ENCODE measurements at regions of chr19 and their contacts with region 1.

Region 1: GRCh38 chr19:6048808-6049405 is 61.4 kb downstream of the RFX2 start:
- DNase-seq: peak; percentile 64
- H3K4me3 Mint-ChIP-seq: no peak overlapping the region
- H3K27ac Mint-ChIP-seq: peak overlapping the region; percentile 21
- H3K4me1 Mint-ChIP-seq: peaks cover 7% of the 10 kb centered on the region
- H3K27me3 Mint-ChIP-seq: peaks cover 7% of the 10 kb centered on the region

Region 2: DNA sequence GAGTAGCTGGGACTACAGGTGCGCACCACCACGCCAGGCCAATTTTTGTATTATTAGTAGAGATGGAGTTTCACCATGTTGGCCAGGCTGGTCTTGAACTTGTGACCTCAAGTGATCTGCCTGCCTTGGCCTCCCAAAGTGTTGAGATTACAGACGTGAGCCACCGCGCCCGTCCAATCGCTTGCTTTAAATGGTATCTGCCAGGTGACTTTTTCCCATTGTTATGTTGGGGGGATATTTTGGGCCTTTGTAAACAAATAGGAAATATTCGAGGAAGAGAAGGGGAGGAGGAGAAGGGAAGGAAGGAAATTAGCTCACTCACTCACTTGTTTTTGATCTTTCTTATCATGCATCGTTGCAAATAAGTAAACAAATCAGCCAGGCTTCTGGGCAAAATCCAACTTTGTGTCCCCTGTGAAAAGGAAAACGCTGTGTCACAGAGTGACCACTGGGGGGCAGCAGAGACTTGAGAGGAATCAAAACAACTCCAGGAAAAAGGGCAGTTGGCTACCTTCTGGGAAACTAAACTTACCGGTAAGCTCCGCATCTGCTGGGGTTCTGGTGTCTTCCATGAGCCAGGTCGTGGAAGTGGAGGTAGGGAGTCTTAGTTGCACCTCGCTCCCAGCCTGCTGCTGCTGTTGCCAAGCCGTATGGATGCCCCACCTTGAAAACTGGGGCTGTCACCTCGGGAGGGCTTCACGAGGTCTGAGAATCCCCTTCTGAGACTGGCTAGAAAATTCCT is 61.7 kb before region 1 on chr19:
- intact Hi-C with region 1: loop called (anchors 2 kb)
- DNase-seq: peak; percentile 57
- H3K4me3 Mint-ChIP-seq: peak overlapping the region; percentile 75
- H3K27ac Mint-ChIP-seq: peak overlapping the region; percentile 55
- H3K4me1 Mint-ChIP-seq: peaks cover 44% of the 10 kb centered on the region
- H3K27me3 Mint-ChIP-seq: no peaks in the 10 kb centered on the region

Region 3: GRCh38 chr19:6065685-6066374 is 16.9 kb after region 1 on chr19:
- intact Hi-C with region 1: no loop called
- DNase-seq: no peak
- H3K4me3 Mint-ChIP-seq: peak overlapping the region; percentile 32
- H3K27ac Mint-ChIP-seq: peak overlapping the region; percentile 81
- H3K4me1 Mint-ChIP-seq: peaks cover 48% of the 10 kb centered on the region
- H3K27me3 Mint-ChIP-seq: no peaks in the 10 kb centered on the region

Region 4: DNA sequence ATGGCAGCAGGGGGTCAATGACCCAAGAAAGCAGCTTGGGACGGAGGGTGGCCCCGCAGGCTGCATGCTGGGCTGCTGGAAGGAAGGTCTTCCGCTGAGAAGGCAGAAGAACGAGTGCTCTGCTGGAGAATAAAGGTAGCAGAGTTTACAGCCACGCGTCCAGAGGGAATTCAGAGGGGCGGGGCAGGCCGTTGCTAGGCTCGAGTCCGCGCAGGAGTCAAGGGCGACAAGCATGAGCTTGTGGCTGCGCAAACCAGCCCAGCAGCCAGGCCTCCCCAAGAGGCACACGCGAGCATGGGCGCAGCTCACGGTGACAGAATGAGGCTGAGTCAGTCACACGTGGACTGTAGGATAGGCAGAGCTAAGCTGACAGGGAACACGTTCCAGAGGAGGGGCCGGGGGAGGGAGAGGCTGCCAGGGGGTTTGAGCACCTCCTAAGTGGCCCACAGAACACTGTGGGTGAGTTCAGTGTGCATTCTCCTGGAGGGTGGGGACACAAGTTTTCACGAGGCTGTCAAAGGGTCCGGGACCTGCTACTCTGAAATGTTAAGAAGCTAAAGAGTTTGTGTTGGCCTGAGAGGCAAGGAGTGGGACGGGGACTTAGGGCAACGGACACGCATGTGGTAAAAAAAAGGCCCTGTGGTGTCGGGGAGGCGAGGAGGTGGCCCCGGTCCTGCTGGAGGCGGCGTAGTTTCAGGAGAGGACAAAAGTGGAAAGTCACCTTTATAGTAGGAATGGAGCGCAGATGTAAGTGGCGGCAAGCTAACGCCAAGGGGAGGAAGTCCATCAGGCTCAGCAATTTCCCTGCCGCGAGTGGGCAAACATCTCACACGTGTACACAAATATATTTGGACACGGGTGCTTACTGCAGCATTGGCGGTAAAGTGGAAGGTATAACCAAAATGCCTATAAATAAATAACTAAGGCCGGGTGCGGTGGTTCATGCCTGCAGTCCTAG is 43.7 kb after region 1 on chr19:
- intact Hi-C with region 1: no loop called
- DNase-seq: no peak
- H3K4me3 Mint-ChIP-seq: no peak overlapping the region
- H3K27ac Mint-ChIP-seq: no peak overlapping the region
- H3K4me1 Mint-ChIP-seq: peaks cover 6% of the 10 kb centered on the region
- H3K27me3 Mint-ChIP-seq: peaks cover 3% of the 10 kb centered on the region

Region 5: GRCh38 chr19:6110360-6110977 is 61.6 kb after region 1 on chr19 and contains the start of gene RFX2:
- intact Hi-C with region 1: loop called (anchors 1 kb)
- DNase-seq: peak; percentile 99
- H3K4me3 Mint-ChIP-seq: peak within 1 kb of the TSS; percentile 86
- H3K27ac Mint-ChIP-seq: peak within 1 kb of the TSS; percentile 79
- H3K4me1 Mint-ChIP-seq: peaks cover 27% of the 10 kb centered on the region
- H3K27me3 Mint-ChIP-seq: peaks cover 17% of the 10 kb centered on the region
- total RNA-seq, gene RFX2: 9.2 and 10.2 TPM in 2 replicates

Region 6: DNA sequence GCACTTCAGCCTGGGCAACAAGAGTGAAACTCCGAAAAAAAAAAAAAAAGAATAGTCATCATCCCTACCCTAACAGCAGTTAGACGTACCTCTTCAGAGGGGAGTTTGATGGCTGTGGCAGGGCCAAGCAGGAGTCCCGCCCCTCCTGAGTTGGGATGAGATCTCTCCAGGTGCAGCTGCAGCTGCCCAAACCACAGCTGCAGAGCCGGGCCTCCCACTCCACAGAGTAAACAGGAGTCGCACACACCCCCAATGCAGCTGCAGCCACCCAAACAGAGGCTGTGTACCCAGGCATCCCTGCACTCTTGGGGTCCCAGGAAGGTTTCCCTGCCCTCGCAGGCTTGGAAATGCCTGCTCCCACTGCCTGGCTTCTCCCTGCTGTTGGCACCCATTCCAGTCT is 248.3 kb after region 1 on chr19:
- intact Hi-C with region 1: loop called (anchors 1 kb)
- DNase-seq: no peak
- H3K4me3 Mint-ChIP-seq: no peak overlapping the region
- H3K27ac Mint-ChIP-seq: no peak overlapping the region
- H3K4me1 Mint-ChIP-seq: peaks cover 4% of the 10 kb centered on the region
- H3K27me3 Mint-ChIP-seq: no peaks in the 10 kb centered on the region